ENCODE measurements at regions of chr12 and their contacts with region 1.

Region 1: GRCh38 chr12:111673503-111673902 is 12.3 kb downstream of the BRAP start:
- DNase-seq: no peak
- ATAC-seq: no peak
- H3K4me3 ChIP-seq: no peak overlapping the region
- H3K27ac ChIP-seq: peak overlapping the region in 1 of 10 donors; percentile 9
- H3K4me1 ChIP-seq: peaks cover 0 to 5% (median 0%) of the 10 kb centered on the region in 9 donors
- H3K27me3 ChIP-seq: no peaks in the 10 kb centered on the region
- CTCF ChIP-seq: peak; percentile 5 to 64 (median 51)

Region 2: DNA sequence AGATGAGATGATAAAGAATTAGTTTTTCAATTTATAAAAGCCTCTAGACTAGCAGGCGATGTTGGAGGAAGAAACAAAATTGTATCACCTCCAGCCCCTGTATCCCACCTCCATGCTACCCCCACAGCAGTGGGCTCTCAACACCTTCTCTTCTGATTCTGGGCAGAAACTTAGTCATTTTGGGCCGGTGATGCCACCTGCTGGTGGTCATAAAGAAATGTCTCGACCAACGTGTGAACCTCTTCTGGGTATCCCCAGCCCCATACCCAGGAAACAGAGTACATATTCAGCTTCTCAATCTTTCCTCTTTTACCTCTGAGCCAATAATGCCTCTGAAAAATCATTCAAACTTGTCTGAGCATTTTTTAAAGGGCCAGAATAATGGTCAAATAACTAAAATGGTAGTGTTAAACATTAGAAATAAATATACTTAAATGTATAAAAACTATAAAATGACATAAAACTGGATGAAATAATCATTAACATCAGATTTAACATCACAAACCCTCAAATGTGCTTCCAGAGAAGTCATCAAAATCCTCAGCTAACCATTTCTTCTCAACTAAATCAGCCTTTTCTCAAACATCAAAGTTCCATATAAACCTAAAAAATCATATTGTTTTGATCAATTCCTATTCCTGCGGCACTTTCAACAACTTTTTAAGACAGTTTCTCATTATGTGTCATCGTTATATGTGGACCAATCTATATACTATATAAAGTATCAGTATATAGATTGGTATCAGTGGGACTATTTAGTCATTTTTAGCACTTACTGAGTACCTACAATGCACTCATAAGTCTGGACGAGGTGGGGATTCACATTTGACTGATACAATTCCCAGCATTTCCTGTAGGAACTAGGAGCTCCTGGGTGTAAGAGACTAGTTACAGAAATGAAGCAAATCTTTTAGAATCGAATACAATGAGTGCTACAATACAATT is 143.8 kb before region 1 on chr12:
- intact Hi-C with region 1: loop called in 1 of 10 experiments (anchors 10 kb)
- DNase-seq: peak; percentile 23 to 27
- ATAC-seq: peak in 2 of 8 donors; percentile 47 to 53
- H3K4me3 ChIP-seq: no peak overlapping the region
- H3K27ac ChIP-seq: no peak overlapping the region
- H3K4me1 ChIP-seq: peaks cover 0 to 6% (median 0%) of the 10 kb centered on the region in 9 donors
- H3K27me3 ChIP-seq: no peaks in the 10 kb centered on the region
- CTCF ChIP-seq: peak; percentile 42 to 79 (median 73)

Region 3: GRCh38 chr12:111546758-111547383 is 126.6 kb before region 1 on chr12:
- intact Hi-C with region 1: loop called in 2 of 10 experiments (anchors 10 kb)
- DNase-seq: no peak
- ATAC-seq: no peak
- H3K4me3 ChIP-seq: no peak overlapping the region
- H3K27ac ChIP-seq: no peak overlapping the region
- H3K4me1 ChIP-seq: peaks cover 0 to 4% (median 0%) of the 10 kb centered on the region in 9 donors
- H3K27me3 ChIP-seq: no peaks in the 10 kb centered on the region
- CTCF ChIP-seq: no peak

Region 4: GRCh38 chr12:111557271-111558106 is 116.0 kb before region 1 on chr12:
- intact Hi-C with region 1: loop called in 1 of 10 experiments (anchors 10 kb)
- DNase-seq: no peak
- ATAC-seq: no peak
- H3K4me3 ChIP-seq: no peak overlapping the region
- H3K27ac ChIP-seq: no peak overlapping the region
- H3K4me1 ChIP-seq: peaks cover 0 to 56% (median 20%) of the 10 kb centered on the region in 9 donors
- H3K27me3 ChIP-seq: no peaks in the 10 kb centered on the region
- CTCF ChIP-seq: no peak

Region 5: DNA sequence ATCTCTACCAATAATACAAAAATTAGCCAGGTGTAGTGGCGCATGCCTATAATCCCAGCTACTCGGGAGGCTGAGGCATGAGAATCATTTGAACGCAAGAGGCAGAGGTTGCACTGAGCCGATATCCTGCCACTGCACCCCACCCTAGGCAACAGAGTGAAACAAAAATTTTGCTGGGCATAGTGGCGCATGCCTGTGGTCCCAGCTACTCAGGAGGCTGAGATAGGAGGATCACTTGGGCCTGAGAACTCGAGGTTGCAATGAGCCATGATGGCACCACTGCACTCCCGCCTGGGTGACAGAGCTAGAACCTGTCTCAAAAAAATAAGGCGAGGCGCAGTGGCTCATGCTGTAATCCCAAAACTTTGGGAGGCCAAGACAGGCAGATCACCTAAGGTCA is 83.9 kb before region 1 on chr12:
- intact Hi-C with region 1: no loop called
- DNase-seq: no peak
- ATAC-seq: no peak
- H3K4me3 ChIP-seq: no peak overlapping the region
- H3K27ac ChIP-seq: no peak overlapping the region
- H3K4me1 ChIP-seq: peaks cover 0 to 53% (median 20%) of the 10 kb centered on the region in 9 donors
- H3K27me3 ChIP-seq: no peaks in the 10 kb centered on the region
- CTCF ChIP-seq: no peak

Region 6: GRCh38 chr12:112061137-112061536 is 387.6 kb after region 1 on chr12:
- intact Hi-C with region 1: no loop called
- DNase-seq: no peak
- ATAC-seq: no peak
- H3K4me3 ChIP-seq: no peak overlapping the region
- H3K27ac ChIP-seq: no peak overlapping the region
- H3K4me1 ChIP-seq: peaks cover 0 to 4% (median 0%) of the 10 kb centered on the region in 9 donors
- H3K27me3 ChIP-seq: no peaks in the 10 kb centered on the region
- CTCF ChIP-seq: no peak

Measured in heart right ventricle (tissue), 16 donors.